Activated T-helper 1 cell treated with anti-CD3 and anti-CD28 coated beads, Interleukin-12 subunit alpha, Interleukin-12 subunit beta, Interleukin-2, Interleukin-4 antibody, amounts not matched to agents 30 ng/mL and 10 ng/mL and 1 ng/mL, durations not matched to agents 14 hours and 24 hours and 36 hours (primary cell): ENCODE measurements at regions of chr12 and their contacts with region 1.

Region 1: DNA sequence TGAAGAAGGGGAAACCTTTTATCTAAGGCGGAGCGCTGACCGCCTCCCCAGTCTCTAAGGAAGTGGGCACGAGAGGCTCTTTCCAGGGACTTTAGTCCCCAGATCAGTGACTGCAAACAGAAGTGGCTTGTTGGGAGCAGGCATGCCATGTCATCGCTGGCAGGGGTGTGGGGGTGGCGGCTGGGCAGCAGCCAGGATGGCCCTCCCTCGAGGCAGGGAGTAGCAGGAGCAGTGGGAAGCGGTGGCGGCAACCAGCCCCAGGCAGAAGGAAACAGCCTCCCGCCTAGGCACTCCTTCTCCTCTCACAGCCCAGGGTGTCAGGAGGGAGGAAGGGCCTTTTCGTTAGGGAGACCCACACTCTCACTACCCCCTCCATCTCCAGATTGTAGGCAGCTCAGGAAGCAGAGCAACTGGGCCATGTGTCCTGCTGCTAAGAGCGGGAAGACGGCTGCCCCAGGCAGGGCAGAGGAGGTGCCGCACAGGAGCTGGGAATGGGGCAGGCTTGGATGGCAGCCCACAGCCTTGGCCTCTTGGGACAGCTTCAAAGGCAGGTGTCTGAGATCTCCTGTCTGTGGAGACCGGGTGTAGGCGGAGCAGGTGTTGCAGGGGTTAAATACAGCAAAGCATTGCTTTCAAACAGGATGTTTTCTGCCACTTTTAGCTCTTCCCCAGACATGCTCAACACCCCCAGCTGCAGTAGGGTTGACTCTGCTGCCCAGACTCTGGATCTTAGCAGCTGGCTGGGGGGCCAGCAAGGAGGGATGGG is 21.8 kb downstream of the VDR start:
- DNase-seq: peak; percentile 44
- H3K4me3 Mint-ChIP-seq: peak overlapping the region; percentile 94
- H3K27ac Mint-ChIP-seq: peak overlapping the region; percentile 100
- H3K4me1 Mint-ChIP-seq: peaks cover 91% of the 10 kb centered on the region
- H3K27me3 Mint-ChIP-seq: no peaks in the 10 kb centered on the region

Region 2: GRCh38 chr12:46209914-46210872 is 1672.8 kb before region 1 on chr12:
- intact Hi-C with region 1: loop called (anchors 10 kb)
- DNase-seq: peak; percentile 31
- H3K4me3 Mint-ChIP-seq: peak overlapping the region; percentile 52
- H3K27ac Mint-ChIP-seq: peak overlapping the region; percentile 96
- H3K4me1 Mint-ChIP-seq: peaks cover 64% of the 10 kb centered on the region
- H3K27me3 Mint-ChIP-seq: no peaks in the 10 kb centered on the region

Region 3: DNA sequence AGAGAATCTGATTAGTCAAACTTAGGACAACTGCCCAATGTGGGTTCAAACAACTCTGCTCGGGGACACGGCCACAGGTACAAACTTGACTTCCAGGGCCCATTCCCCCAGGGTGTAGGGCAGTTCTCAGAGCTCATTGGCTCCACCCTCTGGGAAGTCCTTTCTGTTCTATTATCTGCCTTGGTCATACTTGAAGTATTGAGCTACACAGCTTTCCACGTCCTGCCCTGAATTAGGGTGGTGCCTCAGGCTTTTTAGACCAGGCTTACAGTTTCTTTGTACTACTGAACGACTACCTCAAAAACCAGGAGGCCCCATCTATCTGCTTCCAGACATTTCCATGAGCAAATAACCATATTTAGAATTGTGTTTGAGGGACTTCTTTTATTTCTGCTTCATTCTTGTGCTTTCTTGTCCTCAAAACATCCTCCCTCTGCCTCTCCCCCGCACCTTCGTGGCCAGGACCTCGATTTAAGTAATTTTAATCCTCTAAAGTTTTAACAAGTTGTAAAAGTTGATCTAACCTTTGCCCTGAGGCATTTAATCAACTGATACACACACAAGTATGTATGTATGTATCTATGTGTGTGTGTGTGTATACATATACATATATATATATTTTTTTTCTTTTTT is 521.5 kb before region 1 on chr12:
- intact Hi-C with region 1: loop called (anchors 10 kb)
- DNase-seq: peak; percentile 52
- H3K4me3 Mint-ChIP-seq: peak overlapping the region; percentile 67
- H3K27ac Mint-ChIP-seq: peak overlapping the region; percentile 97
- H3K4me1 Mint-ChIP-seq: peaks cover 56% of the 10 kb centered on the region
- H3K27me3 Mint-ChIP-seq: no peaks in the 10 kb centered on the region

Region 4: DNA sequence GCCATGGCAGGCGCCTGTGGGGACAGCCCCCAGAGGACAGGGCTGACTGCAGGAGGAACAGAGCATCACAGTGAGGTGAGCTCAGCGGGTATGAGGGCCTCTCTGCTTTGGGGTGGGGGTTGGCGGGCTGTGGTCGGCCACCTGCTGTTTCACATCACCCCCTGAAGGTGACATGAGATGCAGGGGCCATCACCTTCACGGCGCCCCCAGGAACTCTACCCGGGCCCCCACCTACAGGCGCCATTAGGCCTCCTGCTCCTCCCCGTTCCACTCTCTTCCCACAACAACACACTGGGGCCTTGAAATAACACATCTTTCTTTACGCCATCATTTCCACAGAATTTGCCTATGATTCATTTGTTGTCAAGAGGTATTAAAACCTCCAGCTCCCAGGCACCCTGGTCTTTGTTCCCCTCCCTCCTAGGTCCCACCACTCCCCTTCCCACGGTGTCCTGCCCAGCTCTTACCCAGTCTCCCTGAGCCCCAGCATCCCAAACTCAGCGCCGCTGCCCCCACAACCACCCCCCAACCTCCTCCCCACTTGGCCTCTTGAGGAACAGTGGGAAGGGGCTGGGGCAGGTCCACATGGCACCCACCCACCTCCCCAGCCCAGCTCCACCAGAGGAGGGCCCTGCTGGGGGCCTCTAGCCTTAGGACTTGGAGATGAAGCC is 50.6 kb before region 1 on chr12:
- intact Hi-C with region 1: loop called (anchors 1 kb)
- DNase-seq: no peak
- H3K4me3 Mint-ChIP-seq: peak overlapping the region; percentile 75
- H3K27ac Mint-ChIP-seq: peak overlapping the region; percentile 98
- H3K4me1 Mint-ChIP-seq: peaks cover 93% of the 10 kb centered on the region
- H3K27me3 Mint-ChIP-seq: no peaks in the 10 kb centered on the region

Region 5: DNA sequence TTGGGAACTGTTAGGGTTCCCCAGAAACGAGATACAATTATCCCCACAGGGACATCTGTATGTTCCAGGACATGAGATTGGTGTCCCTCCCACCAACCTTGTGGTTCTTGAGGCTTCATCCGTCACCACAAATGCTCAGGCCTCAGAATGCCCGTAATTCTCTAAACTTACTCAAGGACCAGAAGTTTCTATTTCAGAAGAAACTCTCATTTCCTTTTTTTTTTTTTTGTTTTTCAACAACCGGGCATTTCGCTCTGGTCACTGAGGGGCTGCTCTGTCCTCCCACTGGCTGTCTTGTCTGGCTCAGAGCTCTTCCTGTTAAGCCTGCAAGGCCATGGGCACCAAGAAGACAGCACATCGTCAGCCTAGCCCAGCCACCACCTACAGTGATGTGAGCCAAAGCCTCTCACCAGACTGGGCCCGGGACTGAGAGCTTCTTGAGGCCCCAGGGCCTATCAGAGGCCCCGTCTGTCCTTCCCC is 14.4 kb before region 1 on chr12:
- intact Hi-C with region 1: loop called (anchors 1 kb)
- DNase-seq: no peak
- H3K4me3 Mint-ChIP-seq: peak overlapping the region; percentile 55
- H3K27ac Mint-ChIP-seq: peak overlapping the region; percentile 98
- H3K4me1 Mint-ChIP-seq: peaks cover 90% of the 10 kb centered on the region
- H3K27me3 Mint-ChIP-seq: no peaks in the 10 kb centered on the region

Region 6: DNA sequence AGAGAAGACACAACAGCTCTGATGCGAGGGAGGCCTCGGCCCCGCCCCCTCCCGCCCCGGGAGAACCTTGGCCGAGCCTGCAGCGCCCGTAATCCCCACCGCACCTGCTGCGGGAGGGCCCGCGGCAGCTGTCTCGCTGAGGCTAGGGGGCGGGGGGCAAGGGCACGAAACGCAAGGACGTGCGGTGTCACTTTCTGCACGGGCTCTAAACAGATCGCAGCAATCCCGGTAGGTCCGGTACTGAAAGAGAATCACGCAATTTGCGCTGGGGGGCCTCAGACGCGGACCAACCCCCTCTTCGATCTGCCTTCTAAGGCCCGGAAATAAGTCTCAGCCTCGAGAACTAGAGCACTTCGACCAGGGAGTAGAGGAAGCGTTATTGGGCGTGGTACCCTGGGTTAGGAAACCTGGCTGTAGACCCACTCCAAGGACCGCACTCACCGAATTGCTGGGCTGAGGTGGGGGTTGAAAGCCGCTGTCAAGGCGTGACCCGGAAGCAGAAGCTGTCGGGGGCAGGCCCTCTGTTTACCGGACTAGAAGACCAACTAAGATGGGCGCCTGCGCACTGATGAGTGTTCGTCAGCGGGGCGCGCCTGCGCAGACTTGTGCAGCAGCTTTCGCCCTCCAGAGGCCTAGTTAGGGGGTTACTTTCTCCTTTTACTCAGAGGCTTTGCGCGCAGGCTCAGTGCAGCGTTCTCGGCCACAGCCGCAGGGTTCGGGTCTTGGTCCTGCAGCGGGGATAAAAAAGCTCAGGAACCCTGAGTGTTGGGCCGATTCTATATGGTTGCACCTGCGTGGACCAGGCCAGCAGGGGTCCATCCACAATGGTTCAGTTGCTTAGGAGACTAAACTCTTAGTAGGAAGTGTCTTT is 274.3 kb after region 1 on chr12 and contains the start of gene ASB8:
- intact Hi-C with region 1: loop called (anchors 2 kb)
- DNase-seq: peak; percentile 98
- H3K4me3 Mint-ChIP-seq: peak within 1 kb of the TSS; percentile 94
- H3K27ac Mint-ChIP-seq: peak within 1 kb of the TSS; percentile 86
- H3K4me1 Mint-ChIP-seq: peaks cover 21% of the 10 kb centered on the region
- H3K27me3 Mint-ChIP-seq: no peaks in the 10 kb centered on the region
- total RNA-seq, gene ASB8: 33.3 and 36.1 TPM in 2 replicates

Region 7: GRCh38 chr12:49515266-49515665 is 1632.3 kb after region 1 on chr12:
- intact Hi-C with region 1: no loop called
- DNase-seq: no peak
- H3K4me3 Mint-ChIP-seq: no peak overlapping the region
- H3K27ac Mint-ChIP-seq: no peak overlapping the region
- H3K4me1 Mint-ChIP-seq: peaks cover 9% of the 10 kb centered on the region
- H3K27me3 Mint-ChIP-seq: no peaks in the 10 kb centered on the region